Activated CD4-positive, alpha-beta T cell treated with anti-CD3 and anti-CD28 coated beads, Interleukin-2, amount 10 ng/mL, durations not matched to agents 24 days and 14 days (primary cell): ENCODE measurements at regions of chr6 and their contacts with region 1.

Region 1: GRCh38 chr6:108782179-108783041 is 65.8 kb upstream of the ARMC2 start:
- DNase-seq: peak; percentile 93
- H3K4me3 Mint-ChIP-seq: peak overlapping the region; percentile 82
- H3K27ac Mint-ChIP-seq: no peak overlapping the region
- H3K4me1 Mint-ChIP-seq: peaks cover 11% of the 10 kb centered on the region
- H3K27me3 Mint-ChIP-seq: peaks cover 63% of the 10 kb centered on the region

Region 2: DNA sequence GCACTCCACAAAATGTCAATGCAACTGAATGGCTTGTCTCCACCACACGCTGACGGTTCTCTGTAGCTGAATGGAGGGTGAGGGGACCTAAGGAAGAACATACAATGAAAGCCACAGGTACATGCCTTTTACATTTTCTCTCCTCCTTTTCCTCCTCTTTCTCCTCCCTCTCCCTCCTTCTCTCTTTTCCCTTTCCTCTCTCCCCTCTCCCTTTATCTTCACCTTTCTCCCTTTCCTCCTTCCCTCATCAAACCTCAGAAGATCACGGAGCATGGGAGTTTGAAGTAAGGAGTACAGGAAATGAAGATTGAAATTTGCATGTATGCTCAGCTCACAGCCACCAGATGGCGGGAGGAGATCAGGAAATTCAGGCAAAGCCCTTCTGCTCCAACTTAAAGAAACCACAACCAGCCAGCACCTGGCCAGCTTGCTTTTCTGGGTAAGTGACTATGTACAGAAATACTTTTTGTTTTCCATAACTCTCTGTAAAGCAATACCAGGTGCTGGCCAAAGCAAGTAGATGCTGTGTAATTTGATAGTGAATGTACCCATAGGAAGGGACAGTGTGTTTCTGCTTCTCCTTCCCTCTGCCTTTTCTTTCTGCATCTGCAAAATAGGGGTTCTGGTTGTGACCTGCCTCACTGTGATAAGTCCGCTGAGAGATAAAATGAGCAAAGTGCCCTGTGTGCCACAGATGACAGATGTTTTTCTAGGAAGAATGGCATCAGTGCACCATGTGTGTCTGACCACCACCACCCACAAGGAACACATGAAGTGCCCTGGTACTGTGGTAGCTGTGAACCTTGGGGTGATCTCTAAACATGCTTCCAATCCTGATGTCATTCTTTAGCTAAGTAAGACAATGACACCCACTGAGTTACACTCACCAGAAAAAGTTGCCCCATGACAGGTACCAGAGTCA is 240.3 kb before region 1 on chr6:
- intact Hi-C with region 1: loop called (anchors 1 kb)
- DNase-seq: peak; percentile 88
- H3K4me3 Mint-ChIP-seq: peak overlapping the region; percentile 22
- H3K27ac Mint-ChIP-seq: no peak overlapping the region
- H3K4me1 Mint-ChIP-seq: peaks cover 9% of the 10 kb centered on the region
- H3K27me3 Mint-ChIP-seq: peaks cover 45% of the 10 kb centered on the region

Region 3: DNA sequence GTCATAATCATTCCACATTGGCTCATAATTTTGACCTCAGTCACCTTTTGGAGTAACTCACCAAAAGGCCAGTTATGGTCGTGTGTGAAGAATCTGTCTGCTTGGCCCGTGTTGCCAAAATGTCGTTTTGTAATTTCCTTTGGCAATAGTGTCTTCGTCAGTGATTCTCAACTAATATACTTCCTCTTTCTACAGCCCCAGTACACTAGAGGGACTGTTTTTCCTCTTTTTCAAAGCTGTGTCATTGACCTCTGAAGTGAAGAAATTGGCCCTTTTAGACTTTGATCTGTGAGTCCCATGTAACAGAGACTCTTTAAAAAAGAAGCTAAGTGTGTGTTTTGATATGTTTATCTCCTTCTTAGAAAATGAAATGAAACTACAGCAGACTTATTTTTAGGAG is 216.5 kb before region 1 on chr6:
- intact Hi-C with region 1: loop called (anchors 1 kb)
- DNase-seq: no peak
- H3K4me3 Mint-ChIP-seq: no peak overlapping the region
- H3K27ac Mint-ChIP-seq: no peak overlapping the region
- H3K4me1 Mint-ChIP-seq: peaks cover 41% of the 10 kb centered on the region
- H3K27me3 Mint-ChIP-seq: peaks cover 34% of the 10 kb centered on the region

Region 4: DNA sequence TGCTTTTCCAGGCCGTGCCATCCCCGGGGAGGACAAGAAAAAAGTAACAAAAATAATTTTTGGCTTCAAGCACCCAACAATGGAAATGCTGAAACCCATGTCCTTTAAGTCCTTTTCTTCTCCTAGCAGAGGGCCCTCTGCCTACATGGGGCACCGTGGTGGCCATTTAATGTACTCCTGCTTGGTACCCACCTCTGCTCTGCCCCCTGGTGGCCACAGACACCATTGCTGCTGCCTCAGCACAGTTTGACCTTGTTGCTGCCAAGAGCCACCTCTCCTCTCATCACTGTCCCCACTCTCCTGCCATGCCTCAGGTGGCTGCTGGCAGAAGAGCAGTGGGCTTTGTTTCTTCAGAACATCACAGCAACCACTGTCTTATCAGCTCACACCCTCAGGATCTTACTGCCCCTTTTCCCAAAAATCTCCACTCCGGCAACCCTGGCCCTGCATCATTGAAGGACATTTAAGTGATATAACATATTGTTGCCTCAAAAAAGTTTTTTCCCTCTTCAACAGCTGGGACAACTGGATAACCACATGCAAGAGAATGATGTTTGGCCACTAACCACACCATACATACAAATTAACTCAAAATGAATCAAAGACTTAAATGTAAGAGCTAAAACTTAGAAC is 52.9 kb after region 1 on chr6:
- intact Hi-C with region 1: loop called (anchors 5 kb)
- DNase-seq: peak; percentile 94
- H3K4me3 Mint-ChIP-seq: no peak overlapping the region
- H3K27ac Mint-ChIP-seq: peak overlapping the region; percentile 14
- H3K4me1 Mint-ChIP-seq: peaks cover 26% of the 10 kb centered on the region
- H3K27me3 Mint-ChIP-seq: peaks cover 18% of the 10 kb centered on the region